Gastrocnemius medialis (tissue), 4 donors: ENCODE measurements at regions of chr10 and their contacts with region 1.

Region 1: GRCh38 chr10:6144406-6145165 is 55.8 kb downstream of the RBM17 start:
- DNase-seq: peak; percentile 89 to 91
- ATAC-seq: peak; percentile 59 to 71
- H3K4me3 ChIP-seq: peak overlapping the region; percentile 77 to 94 (median 81)
- H3K27ac ChIP-seq: peak overlapping the region; percentile 83 to 95 (median 89)
- H3K4me1 ChIP-seq: peaks cover 45 to 59% of the 10 kb centered on the region in 2 donors
- H3K27me3 ChIP-seq: no peaks in the 10 kb centered on the region
- CTCF ChIP-seq: peak in 1 of 5 experiments; percentile 31
- POLR2A ChIP-seq: peak; percentile 92 to 98

Region 2: DNA sequence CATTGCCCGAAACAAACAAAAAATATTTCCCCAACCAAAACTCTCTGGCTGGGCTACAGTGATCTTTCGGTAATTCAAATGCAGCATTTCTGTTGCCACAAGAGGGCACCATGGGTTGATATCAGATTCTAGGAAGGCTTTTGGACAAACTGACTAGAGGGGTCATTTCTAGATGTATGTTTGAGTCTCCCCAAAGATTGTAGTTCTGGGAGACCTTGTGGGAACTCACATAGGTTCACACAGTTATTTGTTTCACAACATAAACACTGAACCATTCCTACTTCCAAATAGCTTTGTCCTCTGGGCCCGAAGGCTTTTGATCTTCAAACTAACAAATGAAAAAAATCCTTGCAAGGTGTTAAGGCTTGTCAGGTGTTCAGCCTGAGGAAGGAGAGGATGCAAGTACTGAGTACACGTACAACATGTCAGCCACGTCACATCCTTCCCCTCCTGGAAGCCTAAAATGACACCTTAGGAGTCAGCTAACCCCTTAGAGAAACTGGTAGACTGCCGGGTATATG is 130.3 kb before region 1 on chr10:
- in situ Hi-C with region 1: no loop called
- intact Hi-C with region 1: loop called (anchors 5 kb)
- DNase-seq: peak; percentile 24 to 29
- ATAC-seq: peak; percentile 60 to 66
- H3K4me3 ChIP-seq: peak overlapping the region in 1 of 4 donors; percentile 6
- H3K27ac ChIP-seq: no peak overlapping the region
- H3K4me1 ChIP-seq: no peaks in the 10 kb centered on the region
- H3K27me3 ChIP-seq: peaks cover 0 to 3% (median 0%) of the 10 kb centered on the region in 3 donors
- CTCF ChIP-seq: peak; percentile 43 to 75 (median 52)
- POLR2A ChIP-seq: no peak

Region 3: DNA sequence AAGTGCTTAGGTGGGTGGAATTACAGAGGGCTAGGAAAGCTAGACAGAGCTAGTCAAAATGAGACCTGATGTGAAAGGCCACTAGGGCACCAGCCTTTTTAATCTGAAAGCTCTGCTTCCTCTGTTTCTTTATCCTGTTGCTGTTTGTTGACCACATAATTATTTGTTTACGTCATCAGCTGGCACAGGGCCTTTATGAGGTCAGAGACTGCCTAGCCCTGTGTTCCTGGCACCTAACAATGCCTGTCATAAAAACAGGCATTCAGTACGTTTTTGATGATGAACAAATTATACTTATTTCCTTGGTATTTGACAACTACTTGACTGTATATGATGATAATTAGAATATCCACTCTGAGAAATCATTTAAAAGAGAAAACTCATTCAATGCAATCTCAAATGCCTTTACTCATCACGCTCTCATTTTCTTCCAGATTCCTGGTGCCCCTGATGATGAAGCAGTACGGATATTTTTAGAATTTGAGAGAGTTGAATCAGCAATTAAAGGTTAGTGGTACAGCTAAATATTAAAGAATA is 29.7 kb before region 1 on chr10:
- in situ Hi-C with region 1: no loop called
- intact Hi-C with region 1: loop called (anchors 2 kb)
- DNase-seq: peak in 1 of 2 donors; percentile 49
- ATAC-seq: peak; percentile 15 to 24
- H3K4me3 ChIP-seq: no peak overlapping the region
- H3K27ac ChIP-seq: peak overlapping the region; percentile 78 to 83 (median 80)
- H3K4me1 ChIP-seq: peaks cover 48 to 49% of the 10 kb centered on the region in 2 donors
- H3K27me3 ChIP-seq: no peaks in the 10 kb centered on the region
- CTCF ChIP-seq: no peak
- POLR2A ChIP-seq: no peak

Region 4: GRCh38 chr10:6163364-6164270 is 19.0 kb after region 1 on chr10:
- in situ Hi-C with region 1: no loop called
- intact Hi-C with region 1: loop called (anchors 1 kb)
- DNase-seq: peak; percentile 91 to 96
- ATAC-seq: peak; percentile 80 to 86
- H3K4me3 ChIP-seq: peak overlapping the region; percentile 67 to 79 (median 76)
- H3K27ac ChIP-seq: peak overlapping the region; percentile 96 to 99 (median 99)
- H3K4me1 ChIP-seq: peaks cover 38 to 62% of the 10 kb centered on the region in 2 donors
- H3K27me3 ChIP-seq: no peaks in the 10 kb centered on the region
- CTCF ChIP-seq: peak in 2 of 5 experiments; percentile 30 to 31
- POLR2A ChIP-seq: peak; percentile 83 to 90

Region 5: GRCh38 chr10:6202684-6203330 is 58.2 kb after region 1 on chr10 and contains the start of gene PFKFB3:
- in situ Hi-C with region 1: no loop called
- intact Hi-C with region 1: loop called (anchors 1 kb)
- DNase-seq: peak; percentile 94 to 95
- ATAC-seq: peak; percentile 30 to 41
- H3K4me3 ChIP-seq: peak within 1 kb of the TSS; percentile 67 to 100 (median 90)
- H3K27ac ChIP-seq: peak within 1 kb of the TSS; percentile 89 to 98 (median 95)
- H3K4me1 ChIP-seq: peaks cover 44 to 46% of the 10 kb centered on the region in 2 donors
- H3K27me3 ChIP-seq: no peaks in the 10 kb centered on the region
- CTCF ChIP-seq: peak; percentile 94 to 100 (median 99)
- POLR2A ChIP-seq: peak; percentile 99 to 100
- total RNA-seq, gene PFKFB3: 218 to 1,159 (median 337) TPM